CD8-positive, alpha-beta T cell (primary cell): ENCODE measurements at regions of chr13 and their contacts with region 1.

Region 1: DNA sequence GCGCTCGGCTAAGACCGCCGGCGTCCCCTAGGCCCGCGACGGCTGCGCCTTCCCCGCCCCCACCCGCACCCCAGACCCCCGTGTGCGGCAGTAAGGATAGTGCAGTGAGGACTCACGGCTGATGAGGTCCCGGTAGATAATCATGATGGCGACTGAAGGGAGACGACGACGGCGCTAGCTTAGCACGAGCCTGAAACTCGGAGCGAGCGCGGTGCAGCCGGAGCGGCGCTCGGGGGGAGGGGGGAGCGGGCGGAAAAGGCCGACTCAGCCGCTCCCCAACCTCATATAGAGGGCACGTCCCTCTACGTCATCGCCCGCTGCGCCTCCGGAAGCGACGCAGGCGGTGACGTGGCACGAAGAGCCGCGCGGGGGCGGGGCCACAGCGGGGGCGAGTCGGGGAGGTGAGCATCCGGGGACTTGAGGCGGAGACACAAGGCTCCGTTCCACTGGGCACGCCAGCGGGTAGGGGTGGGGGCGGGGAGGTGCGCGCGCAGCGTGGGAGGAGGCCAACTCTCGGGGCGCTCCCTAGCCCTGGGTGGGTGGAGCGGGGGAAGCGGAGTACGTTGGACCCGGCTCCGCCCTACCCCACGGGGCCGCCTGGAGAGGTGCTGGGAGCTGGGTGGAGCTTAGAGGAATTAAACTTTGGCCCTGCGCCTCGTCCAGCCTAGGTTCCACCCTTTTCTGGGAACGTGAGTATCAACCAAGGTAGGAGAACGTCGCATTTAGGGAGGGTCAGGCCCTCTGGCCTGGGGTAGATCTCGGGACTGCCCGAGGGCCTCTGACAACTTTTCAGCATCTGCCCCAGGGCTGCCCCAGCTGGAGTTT is at the start of gene TPT1:
- DNase-seq: peak; percentile 99 to 100 (median 100)
- ATAC-seq: peak; percentile 86
- H3K4me3 ChIP-seq: peak within 1 kb of the TSS; percentile 83 to 89
- H3K4me3 Mint-ChIP-seq: peak within 1 kb of the TSS; percentile 99
- H3K27ac ChIP-seq: peak within 1 kb of the TSS; percentile 96 to 99
- H3K27ac Mint-ChIP-seq: peak within 1 kb of the TSS; percentile 99
- H3K4me1 ChIP-seq: peaks cover 42% of the 10 kb centered on the region
- H3K4me1 Mint-ChIP-seq: peaks cover 63% of the 10 kb centered on the region
- H3K27me3 ChIP-seq: no peaks in the 10 kb centered on the region
- H3K27me3 Mint-ChIP-seq: no peaks in the 10 kb centered on the region
- CTCF ChIP-seq: no peak
- total RNA-seq, gene TPT1: 8,260 to 8,503 TPM

Region 2: GRCh38 chr13:44988973-44989817 is 351.9 kb before region 1 on chr13 and contains the starts of genes GPALPP1 and NUFIP1:
- CTCF ChIA-PET with region 1: no interaction called
- POLR2A ChIA-PET with region 1: no interaction called
- intact Hi-C with region 1: loop called in 1 of 2 experiments (anchors 1 kb)
- DNase-seq: peak; percentile 79 to 96 (median 93)
- ATAC-seq: peak; percentile 94
- H3K4me3 ChIP-seq: peak within 1 kb of the TSS; percentile 88 to 92
- H3K4me3 Mint-ChIP-seq: peak within 1 kb of the TSS; percentile 100
- H3K27ac ChIP-seq: peak within 1 kb of the TSS; percentile 86 to 90
- H3K27ac Mint-ChIP-seq: peak within 1 kb of the TSS; percentile 99
- H3K4me1 ChIP-seq: peaks cover 20% of the 10 kb centered on the region
- H3K4me1 Mint-ChIP-seq: peaks cover 64% of the 10 kb centered on the region
- H3K27me3 ChIP-seq: no peaks in the 10 kb centered on the region
- H3K27me3 Mint-ChIP-seq: no peaks in the 10 kb centered on the region
- CTCF ChIP-seq: no peak
- total RNA-seq, gene GPALPP1: 16.7 to 17.8 TPM
- total RNA-seq, gene NUFIP1: 5.2 to 6.1 TPM

Region 3: GRCh38 chr13:45109102-45109720 is 231.9 kb before region 1 on chr13:
- CTCF ChIA-PET with region 1: no interaction called
- POLR2A ChIA-PET with region 1: no interaction called
- intact Hi-C with region 1: no loop called
- DNase-seq: peak in 2 of 9 experiments; percentile 12 to 21
- ATAC-seq: peak; percentile 56
- H3K4me3 ChIP-seq: no peak overlapping the region
- H3K4me3 Mint-ChIP-seq: peak overlapping the region; percentile 3
- H3K27ac ChIP-seq: no peak overlapping the region
- H3K27ac Mint-ChIP-seq: no peak overlapping the region
- H3K4me1 ChIP-seq: no peaks in the 10 kb centered on the region
- H3K4me1 Mint-ChIP-seq: peaks cover 6% of the 10 kb centered on the region
- H3K27me3 ChIP-seq: no peaks in the 10 kb centered on the region
- H3K27me3 Mint-ChIP-seq: peaks cover 7% of the 10 kb centered on the region
- CTCF ChIP-seq: no peak

Region 4: GRCh38 chr13:45142440-45143345 is 198.4 kb before region 1 on chr13:
- CTCF ChIA-PET with region 1: no interaction called
- POLR2A ChIA-PET with region 1: no interaction called
- intact Hi-C with region 1: no loop called
- DNase-seq: no peak
- ATAC-seq: no peak
- H3K4me3 ChIP-seq: no peak overlapping the region
- H3K4me3 Mint-ChIP-seq: no peak overlapping the region
- H3K27ac ChIP-seq: no peak overlapping the region
- H3K27ac Mint-ChIP-seq: no peak overlapping the region
- H3K4me1 ChIP-seq: no peaks in the 10 kb centered on the region
- H3K4me1 Mint-ChIP-seq: peaks cover 38% of the 10 kb centered on the region
- H3K27me3 ChIP-seq: no peaks in the 10 kb centered on the region
- H3K27me3 Mint-ChIP-seq: no peaks in the 10 kb centered on the region
- CTCF ChIP-seq: no peak

Region 5: DNA sequence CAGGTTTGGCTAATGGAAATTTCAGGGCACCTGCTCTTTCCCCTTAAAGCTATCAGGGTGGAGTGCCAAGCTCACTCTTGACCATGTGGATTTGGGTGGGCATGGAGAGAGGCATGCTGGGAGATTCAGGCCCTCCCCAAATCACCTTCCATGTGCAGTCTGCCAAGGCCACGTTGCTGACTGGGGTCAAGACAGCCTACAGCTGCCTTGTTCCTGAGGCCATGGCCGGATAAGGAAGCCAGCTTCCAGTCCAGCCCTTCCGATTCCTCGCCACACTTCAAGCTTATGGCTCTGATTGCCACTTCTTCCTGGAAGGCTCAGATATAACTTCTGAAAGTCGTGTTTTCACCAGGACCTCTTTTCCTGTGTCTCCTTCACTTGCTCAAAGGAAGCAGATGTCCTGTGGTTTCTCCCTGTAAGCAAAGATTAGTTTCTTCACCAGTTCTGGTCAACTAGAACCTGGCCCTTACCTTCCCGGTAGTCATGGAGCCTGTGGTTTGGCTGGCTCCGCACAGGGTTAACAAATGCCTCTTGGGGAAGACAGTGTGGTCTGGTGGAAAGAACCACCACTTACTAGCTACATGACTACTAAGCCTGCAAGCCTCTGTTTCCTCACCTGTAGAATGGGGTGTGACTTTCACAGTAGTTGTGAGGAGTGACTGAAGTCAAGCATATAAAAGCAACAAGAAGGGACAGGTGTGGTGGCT is 16.0 kb after region 1 on chr13:
- CTCF ChIA-PET with region 1: interaction called, 6 read pairs
- POLR2A ChIA-PET with region 1: interaction called, 4 read pairs
- intact Hi-C with region 1: loop called in 1 of 2 experiments (anchors 2 kb)
- DNase-seq: no peak
- ATAC-seq: no peak
- H3K4me3 ChIP-seq: no peak overlapping the region
- H3K4me3 Mint-ChIP-seq: no peak overlapping the region
- H3K27ac ChIP-seq: peak overlapping the region in 1 of 2 experiments; percentile 8
- H3K27ac Mint-ChIP-seq: peak overlapping the region; percentile 81
- H3K4me1 ChIP-seq: no peaks in the 10 kb centered on the region
- H3K4me1 Mint-ChIP-seq: peaks cover 16% of the 10 kb centered on the region
- H3K27me3 ChIP-seq: no peaks in the 10 kb centered on the region
- H3K27me3 Mint-ChIP-seq: no peaks in the 10 kb centered on the region
- CTCF ChIP-seq: no peak

Region 6: DNA sequence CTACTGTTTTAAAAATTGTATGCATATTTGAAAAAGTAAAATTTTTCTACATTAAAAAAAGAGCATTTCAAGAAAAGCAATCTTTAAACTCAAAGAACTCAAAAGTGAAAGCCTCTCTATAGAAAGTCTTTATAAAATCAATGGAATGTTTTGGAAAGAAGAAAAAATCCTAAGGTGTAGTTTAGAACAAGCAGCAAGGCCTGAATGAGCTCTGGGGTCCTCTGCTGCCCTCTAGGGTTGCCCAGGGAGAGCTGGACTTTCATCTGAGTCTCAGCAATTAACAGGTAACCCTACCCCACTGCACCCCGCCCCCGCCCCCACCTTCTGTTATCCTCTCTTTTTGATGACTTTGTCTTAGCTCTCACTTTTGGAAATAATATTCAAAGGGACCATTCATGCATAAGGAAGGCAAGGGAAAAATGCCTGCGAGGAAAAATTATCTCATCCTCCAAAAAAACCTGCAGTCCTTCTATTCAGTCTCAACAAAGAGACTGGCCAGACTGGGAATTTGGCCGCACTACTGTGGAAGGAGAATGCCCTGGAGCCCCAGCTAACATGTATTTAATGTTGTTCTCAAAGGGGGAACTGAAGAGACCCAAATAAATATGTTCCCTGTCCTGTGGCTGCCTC is 52.9 kb after region 1 on chr13:
- CTCF ChIA-PET with region 1: interaction called, 13 read pairs
- POLR2A ChIA-PET with region 1: interaction called, 4 read pairs
- intact Hi-C with region 1: loop called in 1 of 2 experiments (anchors 2 kb)
- DNase-seq: peak in 4 of 9 experiments; percentile 31 to 69 (median 48)
- ATAC-seq: no peak
- H3K4me3 ChIP-seq: no peak overlapping the region
- H3K4me3 Mint-ChIP-seq: no peak overlapping the region
- H3K27ac ChIP-seq: no peak overlapping the region
- H3K27ac Mint-ChIP-seq: no peak overlapping the region
- H3K4me1 ChIP-seq: peaks cover 43% of the 10 kb centered on the region
- H3K4me1 Mint-ChIP-seq: peaks cover 46% of the 10 kb centered on the region
- H3K27me3 ChIP-seq: no peaks in the 10 kb centered on the region
- H3K27me3 Mint-ChIP-seq: no peaks in the 10 kb centered on the region
- CTCF ChIP-seq: peak; percentile 38

Region 7: GRCh38 chr13:45417790-45418534 is 76.8 kb after region 1 on chr13 and contains the start of gene SLC25A30:
- CTCF ChIA-PET with region 1: interaction called, 3 read pairs
- POLR2A ChIA-PET with region 1: interaction called, 19 read pairs
- intact Hi-C with region 1: loop called (anchors 1 kb)
- DNase-seq: peak; percentile 83 to 96 (median 91)
- ATAC-seq: peak; percentile 90
- H3K4me3 ChIP-seq: peak within 1 kb of the TSS; percentile 88 to 97
- H3K4me3 Mint-ChIP-seq: peak within 1 kb of the TSS; percentile 94
- H3K27ac ChIP-seq: peak within 1 kb of the TSS; percentile 81 to 85
- H3K27ac Mint-ChIP-seq: peak within 1 kb of the TSS; percentile 96
- H3K4me1 ChIP-seq: peaks cover 24% of the 10 kb centered on the region
- H3K4me1 Mint-ChIP-seq: peaks cover 32% of the 10 kb centered on the region
- H3K27me3 ChIP-seq: no peaks in the 10 kb centered on the region
- H3K27me3 Mint-ChIP-seq: no peaks in the 10 kb centered on the region
- CTCF ChIP-seq: no peak
- total RNA-seq, gene SLC25A30: 37.7 to 40.5 TPM

Region 8: GRCh38 chr13:45464687-45465453 is 123.7 kb after region 1 on chr13 and contains the start of gene COG3:
- CTCF ChIA-PET with region 1: interaction called, 9 read pairs
- POLR2A ChIA-PET with region 1: interaction called, 7 read pairs
- intact Hi-C with region 1: loop called (anchors 1 to 2 kb)
- DNase-seq: peak; percentile 86 to 98 (median 94)
- ATAC-seq: peak; percentile 94
- H3K4me3 ChIP-seq: peak within 1 kb of the TSS; percentile 77 to 85
- H3K4me3 Mint-ChIP-seq: peak within 1 kb of the TSS; percentile 92
- H3K27ac ChIP-seq: peak within 1 kb of the TSS; percentile 82 to 95
- H3K27ac Mint-ChIP-seq: peak within 1 kb of the TSS; percentile 91
- H3K4me1 ChIP-seq: peaks cover 38% of the 10 kb centered on the region
- H3K4me1 Mint-ChIP-seq: peaks cover 49% of the 10 kb centered on the region
- H3K27me3 ChIP-seq: no peaks in the 10 kb centered on the region
- H3K27me3 Mint-ChIP-seq: no peaks in the 10 kb centered on the region
- CTCF ChIP-seq: peak; percentile 6
- total RNA-seq, gene COG3: 45.9 to 47.6 TPM